Common myeloid progenitor, CD34-positive (primary cell): ENCODE measurements at regions of chr2 and their contacts with region 1.

Region 1: GRCh38 chr2:32496662-32497061 is 131.2 kb upstream of the TTC27 start:
- DNase-seq: peak in 2 of 3 donors; percentile 8 to 12
- H3K4me3 ChIP-seq: no peak overlapping the region
- H3K27ac ChIP-seq: no peak overlapping the region
- H3K4me1 ChIP-seq: no peaks in the 10 kb centered on the region
- H3K27me3 ChIP-seq: no peaks in the 10 kb centered on the region

Region 2: GRCh38 chr2:32516567-32516966 is 19.9 kb after region 1 on chr2:
- CTCF ChIA-PET with region 1: no interaction called
- POLR2A ChIA-PET with region 1: no interaction called
- DNase-seq: peak in 1 of 3 donors; percentile 4
- H3K4me3 ChIP-seq: no peak overlapping the region
- H3K27ac ChIP-seq: no peak overlapping the region
- H3K4me1 ChIP-seq: no peaks in the 10 kb centered on the region
- H3K27me3 ChIP-seq: no peaks in the 10 kb centered on the region

Region 3: GRCh38 chr2:32622570-32623315 is 126.1 kb after region 1 on chr2:
- CTCF ChIA-PET with region 1: no interaction called
- POLR2A ChIA-PET with region 1: no interaction called
- DNase-seq: no peak
- H3K4me3 ChIP-seq: no peak overlapping the region
- H3K27ac ChIP-seq: peak overlapping the region in 1 of 2 experiments; percentile 34
- H3K4me1 ChIP-seq: peaks cover 0 to 6% (median 2%) of the 10 kb centered on the region in 4 experiments
- H3K27me3 ChIP-seq: no peaks in the 10 kb centered on the region

Region 4: DNA sequence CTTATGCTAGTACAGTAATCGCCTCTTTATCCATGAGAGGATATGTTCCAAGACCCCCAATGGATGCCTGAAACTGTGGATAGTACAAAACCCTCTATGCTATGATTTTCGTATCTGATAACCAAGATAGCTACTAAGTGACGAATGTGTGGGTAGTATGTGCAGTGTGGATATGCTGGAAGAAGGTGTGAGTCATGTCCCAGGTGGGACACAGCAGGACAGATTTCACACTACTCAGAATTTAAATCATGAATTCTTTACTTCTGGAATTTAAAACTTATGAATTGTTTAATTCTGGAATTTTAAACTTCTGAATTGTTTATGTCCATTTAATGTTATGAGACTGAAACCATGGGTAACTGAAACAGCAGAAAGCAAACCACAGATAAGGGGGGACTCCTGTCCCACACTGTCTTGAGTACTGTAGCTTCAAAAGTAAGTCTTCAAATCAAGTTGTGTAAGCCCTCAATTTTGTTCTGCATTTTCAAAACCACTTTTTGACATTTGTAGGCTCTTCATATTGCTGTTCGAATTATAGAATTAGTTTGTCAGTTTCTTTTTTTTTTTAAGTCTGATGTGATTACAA is 566.1 kb after region 1 on chr2:
- CTCF ChIA-PET with region 1: no interaction called
- POLR2A ChIA-PET with region 1: interaction called, 12 read pairs
- DNase-seq: peak in 2 of 3 donors; percentile 5 to 11
- H3K4me3 ChIP-seq: no peak overlapping the region
- H3K27ac ChIP-seq: no peak overlapping the region
- H3K4me1 ChIP-seq: no peaks in the 10 kb centered on the region
- H3K27me3 ChIP-seq: no peaks in the 10 kb centered on the region